HEK293T (cell line): ENCODE measurements at regions of chr1 and their contacts with region 1.

Region 1: DNA sequence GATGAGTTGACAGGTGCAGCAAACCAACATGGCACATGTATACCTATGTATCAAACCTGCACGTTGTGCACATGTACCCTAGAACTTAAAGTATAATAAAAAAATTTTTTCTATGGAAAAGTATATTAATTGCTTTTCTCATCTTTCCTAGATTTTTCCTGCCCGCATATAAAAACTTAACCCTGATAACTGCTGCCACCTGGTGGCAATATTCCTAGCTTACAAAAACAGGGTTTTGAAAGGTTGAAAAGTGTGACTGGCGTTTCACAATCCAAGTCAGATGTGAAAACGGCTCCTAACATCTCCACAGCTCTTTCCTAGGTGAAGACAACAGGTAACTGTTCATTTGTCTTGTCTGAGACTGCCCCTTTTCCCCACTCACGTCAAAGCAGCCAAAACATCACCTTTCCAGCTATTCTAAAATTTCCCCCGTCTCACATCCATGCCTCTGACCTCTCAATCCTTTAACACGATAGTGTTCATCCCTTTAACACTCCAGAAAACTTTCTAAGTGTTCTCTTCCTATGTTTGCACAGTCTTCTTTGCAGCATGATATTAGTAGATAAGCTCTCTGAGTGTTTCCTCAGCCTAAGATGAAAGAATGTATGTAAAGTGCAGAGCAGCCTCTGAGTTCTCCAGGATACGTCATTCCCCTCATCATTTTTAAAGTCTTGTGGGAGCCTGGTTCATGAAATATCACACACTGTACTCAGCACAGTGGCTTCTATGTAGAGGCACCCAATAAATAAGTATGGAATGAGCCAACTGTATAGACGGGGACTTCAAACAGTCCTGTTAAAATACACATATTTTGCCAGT is 27.5 kb downstream of the OVGP1 start:
- DNase-seq: peak; percentile 58

Region 2: DNA sequence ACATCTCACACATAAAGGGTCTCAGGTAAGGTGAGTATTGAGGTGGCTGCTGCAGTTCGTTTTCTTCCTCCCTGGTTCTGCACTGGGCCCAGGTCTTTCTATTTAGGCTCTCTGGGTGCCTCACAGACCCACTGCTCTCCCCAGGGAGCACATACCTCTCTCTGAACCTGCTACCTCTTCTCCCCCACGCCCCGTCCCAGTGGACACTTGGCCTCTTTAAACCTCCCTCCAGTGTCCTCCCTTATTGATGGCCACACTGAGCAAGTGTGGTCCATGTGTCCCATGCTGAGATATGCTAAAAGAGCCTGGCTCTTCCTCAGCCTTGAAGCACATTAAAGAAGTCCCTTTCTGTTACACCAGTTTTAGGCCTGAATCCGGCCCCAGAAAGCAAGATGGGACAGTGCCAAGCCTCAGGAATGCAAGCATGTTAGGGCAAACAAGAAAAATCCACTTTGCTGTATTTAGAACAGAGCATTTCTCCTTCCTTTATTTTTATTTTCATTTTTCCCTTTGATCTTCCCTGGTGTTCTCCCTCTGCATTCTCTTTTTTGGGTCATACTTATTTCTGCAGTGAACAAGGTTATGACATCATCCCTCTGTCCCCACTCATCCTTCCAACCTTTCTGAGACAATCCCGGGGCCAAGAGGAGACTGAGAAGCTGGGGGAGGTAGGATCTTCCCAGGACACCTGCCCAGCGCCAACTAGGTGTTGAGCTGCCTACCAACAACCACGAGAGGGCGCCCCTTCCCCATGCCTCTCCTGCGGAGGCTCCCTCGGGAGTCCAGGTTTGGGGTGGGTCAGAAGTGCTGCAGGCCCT is 177.5 kb before region 1 on chr1:
- CTCF ChIA-PET with region 1: interaction called, 23 read pairs
- POLR2A ChIA-PET with region 1: interaction called, 4 read pairs
- DNase-seq: peak; percentile 86

Region 3: GRCh38 chr1:111619635-111620440 is 219.8 kb after region 1 on chr1 and contains the start of gene RAP1A:
- CTCF ChIA-PET with region 1: no interaction called
- POLR2A ChIA-PET with region 1: no interaction called
- DNase-seq: peak; percentile 99